ENCODE measurements at regions of chr5 and their contacts with region 1.

Region 1: GRCh38 chr5:72268753-72269410 is 51.2 kb downstream of the MRPS27 start:
- DNase-seq: peak in 2 of 3 donors; percentile 26 to 77
- ATAC-seq: peak; percentile 53
- H3K4me3 ChIP-seq: no peak overlapping the region
- H3K4me1 ChIP-seq: peaks cover 3% of the 10 kb centered on the region
- CTCF ChIP-seq: no peak

Region 2: DNA sequence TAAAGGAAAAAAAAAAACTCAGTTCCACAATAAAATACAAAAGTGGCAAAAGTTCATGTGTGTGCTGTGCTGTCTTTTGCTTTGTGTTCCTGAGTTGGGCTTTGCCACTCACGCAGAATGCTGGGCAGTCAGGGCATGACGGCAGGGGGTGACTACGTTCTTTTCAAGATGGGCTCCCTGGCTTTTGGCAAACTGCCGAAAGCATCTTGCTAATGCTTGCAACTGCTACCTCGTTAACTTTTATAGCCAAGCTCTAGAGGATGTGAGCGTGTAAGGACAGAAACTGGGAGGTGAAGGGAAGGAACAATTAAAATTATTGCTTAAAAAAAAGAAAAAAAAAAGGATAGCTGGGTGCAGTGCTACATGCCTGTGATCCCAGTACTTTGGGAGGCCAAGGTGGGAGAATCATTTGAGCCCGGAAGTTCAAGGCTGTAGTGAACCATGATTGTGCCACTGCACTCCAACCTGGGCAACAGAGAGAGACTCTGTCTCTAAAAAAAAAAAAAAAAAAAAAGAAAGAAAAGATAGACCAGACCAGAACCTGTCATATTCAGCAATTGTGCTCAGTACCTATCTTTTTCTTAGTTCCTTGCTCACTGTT is 59.3 kb before region 1 on chr5:
- intact Hi-C with region 1: loop called in 1 of 2 experiments (anchors 10 kb)
- DNase-seq: no peak
- ATAC-seq: no peak
- H3K4me3 ChIP-seq: no peak overlapping the region
- H3K4me1 ChIP-seq: no peaks in the 10 kb centered on the region
- CTCF ChIP-seq: no peak

Region 3: GRCh38 chr5:72366324-72366976 is 97.6 kb after region 1 on chr5:
- intact Hi-C with region 1: no loop called
- DNase-seq: peak in 1 of 3 donors; percentile 87
- ATAC-seq: peak; percentile 97
- H3K4me3 ChIP-seq: no peak overlapping the region
- H3K4me1 ChIP-seq: no peaks in the 10 kb centered on the region
- CTCF ChIP-seq: peak; percentile 43